ENCODE measurements at regions of chr17 and their contacts with region 1.

Region 1: GRCh38 chr17:67629971-67630320 is 87.8 kb upstream of the NOL11 start:
- DNase-seq: no peak
- ATAC-seq: peak; percentile 55 to 69

Region 2: DNA sequence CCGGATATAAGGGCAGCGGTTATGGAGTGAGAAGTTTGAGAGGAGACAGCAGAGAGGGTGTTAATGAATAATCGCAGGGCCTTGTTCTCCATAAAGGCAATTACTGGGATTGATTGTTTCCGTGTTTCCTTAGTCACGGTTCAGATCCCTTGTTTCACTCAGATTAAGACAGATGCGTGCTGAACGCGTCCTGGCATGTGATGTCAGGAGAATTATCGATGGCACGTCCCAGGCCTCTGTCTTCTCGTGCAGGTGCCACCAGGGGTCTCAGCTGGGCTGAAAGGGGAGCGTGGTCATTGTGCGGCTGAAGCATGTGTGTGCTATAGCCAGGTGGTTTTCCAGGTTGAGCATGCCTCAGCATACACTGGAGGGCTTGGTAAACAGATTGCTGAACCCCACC is 54.6 kb before region 1 on chr17:
- intact Hi-C with region 1: no loop called
- DNase-seq: no peak
- ATAC-seq: no peak

Region 3: GRCh38 chr17:67689534-67690177 is 59.7 kb after region 1 on chr17:
- intact Hi-C with region 1: loop called in 1 of 2 experiments (anchors 10 kb)
- DNase-seq: peak; percentile 34
- ATAC-seq: peak; percentile 44 to 49

Region 4: DNA sequence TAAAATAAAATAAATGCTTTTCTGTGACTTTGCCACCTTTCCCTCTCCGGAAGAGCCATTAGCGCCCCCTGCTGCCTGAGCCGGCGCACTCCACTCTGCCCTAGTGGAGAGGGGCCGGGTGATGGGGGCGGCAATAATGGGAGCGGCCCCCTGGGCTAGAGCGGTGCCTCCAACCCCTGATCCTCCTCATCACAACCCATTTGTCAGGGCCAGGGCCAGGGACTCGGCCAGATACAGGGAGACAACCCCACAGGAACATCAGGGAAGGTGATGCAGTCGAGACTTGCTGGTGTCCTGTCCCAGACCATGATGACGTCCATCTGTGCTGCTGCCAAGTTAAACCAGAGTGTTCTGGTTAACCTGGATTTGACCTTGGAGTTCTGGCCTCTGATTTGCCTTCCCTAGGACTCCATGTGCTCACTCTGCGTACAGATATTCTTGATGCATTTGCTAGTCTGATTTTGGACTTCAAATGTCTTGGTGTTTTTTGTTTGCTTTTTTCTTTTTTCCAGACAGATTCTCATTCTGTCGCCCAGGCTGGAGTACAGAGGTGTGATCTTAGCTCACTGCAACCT is 149.2 kb after region 1 on chr17:
- intact Hi-C with region 1: no loop called
- DNase-seq: peak; percentile 82
- ATAC-seq: peak; percentile 68 to 93

Region 5: GRCh38 chr17:68057531-68057952 is 427.6 kb after region 1 on chr17:
- intact Hi-C with region 1: no loop called
- DNase-seq: no peak
- ATAC-seq: peak in 1 of 2 donors; percentile 39

Measured in left cardiac atrium (tissue), 4 donors.